Naive thymus-derived CD4-positive, alpha-beta T cell (primary cell): ENCODE measurements at regions of chr6 and their contacts with region 1.

Region 1: DNA sequence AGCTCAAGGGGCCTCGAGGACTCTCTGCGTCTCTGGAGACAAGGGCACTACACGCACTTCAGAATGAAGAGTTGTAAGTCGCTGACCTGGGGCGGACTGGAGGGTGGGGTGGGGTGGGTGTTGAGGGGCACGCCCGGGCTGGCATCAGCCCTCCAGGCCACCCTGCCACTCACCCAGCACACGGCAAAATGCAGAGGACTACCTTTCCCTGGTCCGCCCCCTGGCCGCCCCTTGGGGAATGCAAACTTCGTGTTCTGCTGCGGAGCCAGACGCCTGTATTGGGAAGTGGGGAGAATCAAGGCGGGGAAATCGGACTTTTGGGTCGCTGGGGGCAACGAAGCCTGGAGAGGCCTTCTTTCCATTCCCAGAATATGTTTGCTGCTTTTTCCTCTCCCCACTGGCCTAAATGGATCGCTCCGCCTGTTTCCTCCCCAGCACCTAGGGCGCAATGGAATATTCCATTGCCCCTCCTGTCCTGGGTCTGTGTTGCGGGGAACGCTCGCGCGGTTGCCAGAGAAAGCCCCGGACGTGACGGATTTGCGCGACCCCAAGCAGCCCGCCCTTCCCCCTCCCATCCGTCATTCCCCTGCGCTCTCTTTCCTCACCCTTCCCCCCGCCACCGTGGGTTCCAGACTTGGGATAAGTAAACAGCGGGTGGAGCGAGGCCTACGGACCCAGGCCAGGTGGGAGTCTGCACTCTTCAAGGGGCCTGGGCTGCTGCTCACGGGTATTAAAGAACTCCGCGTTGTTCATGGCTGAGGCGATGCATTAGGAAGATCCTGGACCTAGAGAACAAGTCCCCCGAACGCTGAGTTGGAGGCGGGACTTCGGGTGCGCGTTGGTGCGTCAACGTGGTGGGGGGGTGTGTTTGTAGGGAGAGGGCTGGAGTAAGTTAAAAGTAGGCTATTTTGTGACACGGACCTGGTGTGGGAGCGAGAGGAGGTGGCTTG is at the start of gene PPT2:
- DNase-seq: peak; percentile 34 to 85 (median 72)
- ATAC-seq: peak; percentile 82
- H3K4me3 ChIP-seq: peak within 1 kb of the TSS; percentile 68
- H3K4me3 Mint-ChIP-seq: peak within 1 kb of the TSS; percentile 87 to 100 (median 98)
- H3K27ac ChIP-seq: peak within 1 kb of the TSS; percentile 82
- H3K27ac Mint-ChIP-seq: peak within 1 kb of the TSS; percentile 87 to 98 (median 92)
- H3K4me1 ChIP-seq: peaks cover 10 to 35% of the 10 kb centered on the region in 2 donors
- H3K4me1 Mint-ChIP-seq: peaks cover 42 to 74% (median 65%) of the 10 kb centered on the region in 7 donors
- H3K27me3 ChIP-seq: no peaks in the 10 kb centered on the region
- H3K27me3 Mint-ChIP-seq: peaks cover 0 to 34% (median 12%) of the 10 kb centered on the region in 5 donors
- total RNA-seq, gene PPT2: 11.8 to 21.9 (median 15.8) TPM

Region 2: GRCh38 chr6:32087574-32088486 is 66.0 kb before region 1 on chr6:
- CTCF ChIA-PET with region 1: no interaction called
- POLR2A ChIA-PET with region 1: no interaction called
- intact Hi-C with region 1: loop called (anchors 1 to 2 kb)
- DNase-seq: peak; percentile 39 to 67 (median 58)
- ATAC-seq: peak; percentile 88
- H3K4me3 ChIP-seq: no peak overlapping the region
- H3K4me3 Mint-ChIP-seq: peak overlapping the region in 5 of 10 donors; percentile 21 to 54 (median 25)
- H3K27ac ChIP-seq: no peak overlapping the region
- H3K27ac Mint-ChIP-seq: no peak overlapping the region
- H3K4me1 ChIP-seq: no peaks in the 10 kb centered on the region
- H3K4me1 Mint-ChIP-seq: peaks cover 0 to 7% (median 0%) of the 10 kb centered on the region in 7 donors
- H3K27me3 ChIP-seq: peaks cover 0 to 5% of the 10 kb centered on the region in 2 donors
- H3K27me3 Mint-ChIP-seq: peaks cover 17 to 58% (median 21%) of the 10 kb centered on the region in 5 donors